Vagina (tissue), 2 donors: ENCODE measurements at regions of chr11 and their contacts with region 1.

Region 1: GRCh38 chr11:61971248-61972111 is 4.0 kb upstream of the FTH1 start:
- DNase-seq: peak in 1 of 2 donors; percentile 100
- H3K4me3 ChIP-seq: peak overlapping the region; percentile 19 to 29
- H3K27ac ChIP-seq: peak overlapping the region; percentile 99
- H3K4me1 ChIP-seq: peaks cover 58% of the 10 kb centered on the region
- H3K27me3 ChIP-seq: no peaks in the 10 kb centered on the region
- CTCF ChIP-seq: no peak
- POLR2A ChIP-seq: peak in 1 of 2 donors; percentile 13

Region 2: GRCh38 chr11:61816736-61817455 is 154.6 kb before region 1 on chr11 and contains the start of gene FADS1:
- intact Hi-C with region 1: loop called (anchors 5 kb)
- DNase-seq: no peak
- H3K4me3 ChIP-seq: peak within 1 kb of the TSS; percentile 51 to 83
- H3K27ac ChIP-seq: peak within 1 kb of the TSS; percentile 99
- H3K4me1 ChIP-seq: peaks cover 21% of the 10 kb centered on the region
- H3K27me3 ChIP-seq: no peaks in the 10 kb centered on the region
- CTCF ChIP-seq: peak in 1 of 3 experiments; percentile 25
- POLR2A ChIP-seq: peak in 1 of 2 donors; percentile 39
- total RNA-seq, gene FADS1: 9.8 TPM

Region 3: DNA sequence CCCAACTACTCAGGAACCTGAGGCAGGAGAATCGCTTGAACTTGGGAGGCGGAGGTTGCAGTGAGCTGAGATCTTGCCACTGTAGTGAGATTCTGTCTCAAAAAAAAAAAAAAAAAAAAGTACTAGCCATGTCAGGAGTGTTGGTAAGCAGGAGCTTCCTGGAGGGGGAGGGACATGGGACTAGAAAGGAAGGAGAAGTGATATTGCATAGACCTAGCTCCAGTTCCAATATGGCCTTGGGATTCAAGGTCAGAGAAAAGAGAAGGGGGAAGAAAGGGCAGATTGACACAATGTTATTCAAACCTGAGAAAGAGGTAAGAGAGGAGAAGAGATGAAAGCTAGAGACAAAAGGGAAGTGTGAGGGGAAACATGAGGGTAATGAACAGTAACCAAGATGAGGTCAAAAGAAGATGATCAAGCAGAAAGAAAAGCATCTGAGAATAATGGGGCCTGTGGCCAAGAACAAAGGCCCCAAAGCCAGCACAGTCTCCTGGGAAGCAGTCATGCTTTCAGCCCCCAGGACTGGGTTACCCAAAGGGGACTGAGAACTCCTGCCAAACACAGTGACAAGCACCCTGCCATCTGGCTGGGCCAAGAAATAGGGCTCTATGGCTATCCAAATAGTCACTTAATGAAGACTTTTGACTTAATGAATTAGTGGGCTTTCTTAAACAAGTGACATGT is 47.6 kb after region 1 on chr11:
- intact Hi-C with region 1: no loop called
- DNase-seq: no peak
- H3K4me3 ChIP-seq: no peak overlapping the region
- H3K27ac ChIP-seq: no peak overlapping the region
- H3K4me1 ChIP-seq: no peaks in the 10 kb centered on the region
- H3K27me3 ChIP-seq: no peaks in the 10 kb centered on the region
- CTCF ChIP-seq: no peak
- POLR2A ChIP-seq: no peak

Region 4: DNA sequence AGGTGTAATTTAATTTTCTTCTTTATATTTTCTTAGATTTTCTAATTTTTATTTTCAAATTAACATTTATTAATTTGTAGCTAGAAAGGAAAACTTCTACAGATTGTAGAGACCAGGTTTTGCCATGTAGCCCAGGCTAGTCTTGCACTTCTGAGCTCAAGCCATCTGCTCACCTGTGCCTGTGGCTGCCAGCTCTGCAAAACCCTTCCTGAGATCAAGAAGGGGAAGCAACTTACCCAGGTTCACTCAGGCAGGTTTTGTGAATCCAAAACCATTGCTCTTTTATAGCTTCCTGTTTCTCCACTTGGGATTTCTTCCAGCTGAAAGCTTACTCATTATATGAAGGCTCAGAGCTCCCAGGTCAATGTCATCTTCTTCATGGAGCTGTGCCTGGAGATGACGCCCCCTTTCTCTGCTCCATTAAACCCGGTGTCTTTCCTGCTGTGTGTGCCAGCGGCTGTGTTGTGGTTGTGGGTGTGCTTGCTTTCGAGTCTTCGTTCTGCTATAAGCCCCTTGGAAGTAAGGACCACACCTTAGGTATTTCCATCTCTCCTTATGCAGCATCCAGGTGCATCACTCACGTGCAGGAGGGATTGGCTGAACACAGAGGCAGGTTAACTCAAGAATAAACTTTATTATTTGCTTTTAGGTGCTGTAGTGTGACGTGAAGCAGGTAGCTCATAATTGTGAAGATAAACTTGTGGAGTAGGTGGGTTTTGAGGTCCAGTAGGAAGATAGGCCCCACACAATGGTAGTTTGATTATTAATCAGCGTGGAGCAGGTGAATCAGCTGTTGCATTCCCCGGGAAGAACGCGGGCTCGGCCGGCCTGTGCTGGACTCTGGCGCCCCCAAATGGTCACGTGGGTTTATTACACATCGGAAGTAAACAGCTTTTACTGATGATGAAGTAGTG is 110.2 kb after region 1 on chr11:
- intact Hi-C with region 1: loop called (anchors 10 kb)
- DNase-seq: peak in 1 of 2 donors; percentile 90
- H3K4me3 ChIP-seq: no peak overlapping the region
- H3K27ac ChIP-seq: no peak overlapping the region
- H3K4me1 ChIP-seq: no peaks in the 10 kb centered on the region
- H3K27me3 ChIP-seq: no peaks in the 10 kb centered on the region
- CTCF ChIP-seq: peak; percentile 78 to 88 (median 88)
- POLR2A ChIP-seq: no peak